ENCODE measurements at regions of chr17 and their contacts with region 1.

Region 1: DNA sequence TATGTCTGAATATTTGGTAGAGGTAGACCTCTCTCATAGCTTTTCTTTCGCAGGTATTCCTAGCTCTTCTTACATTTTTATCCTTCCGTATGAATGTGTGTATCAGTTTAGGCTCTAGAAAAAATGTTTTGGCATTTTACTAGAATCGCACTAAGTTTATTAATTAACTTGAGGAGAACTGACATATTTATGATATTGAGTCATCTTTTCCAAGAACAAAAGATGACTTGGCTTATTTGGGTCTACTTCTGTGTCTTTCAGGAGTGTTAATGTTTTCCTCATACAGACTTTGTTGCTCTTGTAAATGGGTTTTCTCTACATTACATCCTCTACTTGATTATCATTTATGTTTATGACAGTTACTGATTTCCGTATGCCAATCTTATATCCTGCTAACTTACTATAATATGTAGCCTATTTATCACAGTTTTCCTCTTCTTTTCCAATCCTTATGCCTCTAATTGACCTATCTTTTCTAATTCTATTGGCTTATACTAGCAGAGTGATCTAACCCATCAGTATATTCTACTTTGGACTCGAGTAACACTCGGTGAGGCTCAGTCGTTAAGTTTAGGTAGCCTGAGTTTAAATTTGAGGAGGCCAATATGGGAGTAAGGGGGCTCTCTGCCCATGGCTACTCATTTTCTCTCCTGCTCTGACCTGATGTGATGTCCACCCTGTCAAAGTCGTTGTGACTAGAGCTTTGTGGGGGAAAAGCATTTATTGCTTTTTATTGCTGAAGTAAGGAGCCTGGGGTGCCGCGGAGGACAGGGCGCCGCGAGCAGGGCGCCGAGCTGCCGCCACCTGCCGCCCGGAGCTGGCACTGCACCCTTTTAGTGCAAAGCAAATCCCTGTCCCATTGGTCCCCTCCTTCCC is 20.0 kb downstream of the ST6GALNAC1 start:
- H3K4me3 ChIP-seq: peak overlapping the region; percentile 21
- H3K27ac ChIP-seq: no peak overlapping the region
- H3K4me1 ChIP-seq: no peaks in the 10 kb centered on the region
- CTCF ChIP-seq: peak; percentile 82

Region 2: DNA sequence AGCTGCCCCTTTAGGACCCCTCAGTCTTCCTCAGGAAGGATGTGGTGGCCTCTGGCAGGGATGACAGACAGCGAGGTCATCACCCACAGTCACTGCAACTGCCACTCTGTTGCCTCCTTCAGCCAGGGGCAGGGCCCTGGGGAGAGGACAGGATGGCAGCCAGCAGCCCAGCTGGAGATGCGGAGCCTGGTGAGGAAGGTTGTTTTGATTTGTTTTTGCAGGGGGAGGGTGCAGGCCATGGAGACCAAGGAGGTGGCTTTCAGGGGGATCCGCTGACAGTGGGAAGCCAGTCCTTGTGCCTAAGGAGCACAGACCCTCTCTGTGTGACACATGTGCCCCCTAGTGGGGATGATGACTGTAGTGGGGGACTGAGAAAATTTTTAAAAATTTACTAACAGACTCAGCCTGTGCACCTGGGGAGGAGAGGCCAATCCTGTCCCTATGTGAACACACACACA is 76.3 kb before region 1 on chr17:
- CTCF ChIA-PET with region 1: interaction called, 21 read pairs
- POLR2A ChIA-PET with region 1: no interaction called
- H3K4me3 ChIP-seq: no peak overlapping the region
- H3K27ac ChIP-seq: no peak overlapping the region
- H3K4me1 ChIP-seq: peaks cover 21% of the 10 kb centered on the region
- CTCF ChIP-seq: peak; percentile 86

Region 3: GRCh38 chr17:76585818-76586593 is 37.5 kb before region 1 on chr17 and contains the start of gene ST6GALNAC2:
- CTCF ChIA-PET with region 1: interaction called, 10 read pairs
- POLR2A ChIA-PET with region 1: interaction called, 5 read pairs
- H3K4me3 ChIP-seq: peak within 1 kb of the TSS; percentile 48
- H3K27ac ChIP-seq: peak within 1 kb of the TSS; percentile 71
- H3K4me1 ChIP-seq: peaks cover 3% of the 10 kb centered on the region; the same call in 1 of the 2 replicates
- CTCF ChIP-seq: peak; percentile 70

Region 4: DNA sequence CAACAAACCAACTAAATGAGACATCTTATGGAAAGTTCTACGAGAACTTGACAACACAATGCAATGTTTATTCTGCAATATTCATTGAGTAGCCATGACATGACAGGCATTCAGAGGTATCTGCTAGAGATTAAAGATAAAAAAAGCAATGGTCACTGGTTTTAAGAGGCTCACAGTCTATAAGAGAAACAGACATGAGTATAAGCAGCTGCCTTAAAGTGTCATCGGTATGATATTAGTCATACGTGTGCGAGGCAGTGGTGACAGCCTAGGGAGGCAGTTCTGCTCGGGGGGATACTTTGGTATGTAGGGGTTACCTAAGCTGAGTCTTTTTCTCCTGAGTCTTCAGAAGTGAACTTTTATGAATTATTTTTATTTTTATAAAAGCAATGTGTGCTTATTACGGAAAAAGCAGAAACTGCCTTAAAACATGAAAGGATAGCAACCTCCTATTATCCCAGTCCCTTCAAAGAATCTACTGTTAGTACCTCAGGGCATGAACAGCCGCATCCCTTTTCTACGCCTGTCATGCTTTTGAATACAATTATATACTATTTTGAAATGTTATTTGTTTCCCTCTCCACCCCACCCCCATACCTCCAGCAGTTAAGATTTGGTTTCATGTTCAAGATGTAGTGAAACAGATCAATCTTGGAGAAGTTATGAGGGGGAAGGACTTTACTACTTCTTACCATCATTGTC is 12.3 kb after region 1 on chr17:
- CTCF ChIA-PET with region 1: interaction called, 29 read pairs
- POLR2A ChIA-PET with region 1: no interaction called
- H3K4me3 ChIP-seq: no peak overlapping the region
- H3K27ac ChIP-seq: no peak overlapping the region
- H3K4me1 ChIP-seq: peaks cover 8% of the 10 kb centered on the region
- CTCF ChIP-seq: no peak

Region 5: DNA sequence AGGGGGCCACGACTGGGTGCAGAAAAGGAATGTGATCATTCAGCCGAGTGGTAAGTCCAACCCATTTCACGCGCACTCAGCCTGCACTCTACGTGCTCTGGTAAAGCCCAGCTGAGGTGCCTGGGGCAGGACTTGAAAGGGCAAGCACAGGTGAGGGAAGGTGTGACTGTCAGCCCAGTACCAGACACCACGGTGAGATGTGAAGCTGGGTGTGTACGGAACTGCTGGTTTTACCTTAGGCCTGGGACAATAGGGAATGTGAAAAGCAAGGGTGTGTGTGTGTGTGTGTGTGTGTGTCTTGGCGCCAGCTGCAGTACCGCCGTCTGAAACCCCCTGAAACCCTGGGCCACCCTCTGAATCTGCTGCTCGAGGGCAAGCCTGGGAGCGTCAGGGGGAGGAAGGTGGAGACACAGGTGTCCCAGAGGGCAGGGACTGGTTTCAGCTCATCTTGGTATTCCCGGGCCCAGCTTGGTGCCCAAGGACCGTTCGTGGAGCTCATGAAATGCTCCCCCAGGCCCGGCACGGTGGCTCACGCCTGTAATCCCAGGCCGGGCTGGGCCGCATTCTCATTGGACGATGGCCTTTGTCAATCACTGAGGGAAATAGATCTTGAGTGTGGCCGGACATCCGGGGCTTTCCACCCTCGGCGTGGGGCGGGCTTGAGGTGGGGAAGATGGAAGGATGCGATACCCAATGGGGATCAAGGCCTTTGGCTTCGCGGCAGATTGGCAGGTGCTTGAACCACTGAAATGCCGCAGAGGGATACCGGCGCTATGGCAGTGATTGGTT is 47.8 kb after region 1 on chr17:
- CTCF ChIA-PET with region 1: interaction called, 22 read pairs
- POLR2A ChIA-PET with region 1: no interaction called
- H3K4me3 ChIP-seq: peak overlapping the region; percentile 71
- H3K27ac ChIP-seq: peak overlapping the region; percentile 97
- H3K4me1 ChIP-seq: peaks cover 36% of the 10 kb centered on the region
- CTCF ChIP-seq: peak; percentile 62